ENCODE measurements at regions of chr1 and their contacts with region 1.

Region 1: GRCh38 chr1:197356723-197357533 is 88.9 kb downstream of the CRB1 start:
- DNase-seq: peak in 1 of 2 donors; percentile 9
- ATAC-seq: peak; percentile 44

Region 2: GRCh38 chr1:197180252-197180878 is 176.6 kb before region 1 on chr1:
- intact Hi-C with region 1: loop called in 1 of 2 experiments (anchors 10 kb)
- DNase-seq: no peak
- ATAC-seq: peak; percentile 55

Region 3: DNA sequence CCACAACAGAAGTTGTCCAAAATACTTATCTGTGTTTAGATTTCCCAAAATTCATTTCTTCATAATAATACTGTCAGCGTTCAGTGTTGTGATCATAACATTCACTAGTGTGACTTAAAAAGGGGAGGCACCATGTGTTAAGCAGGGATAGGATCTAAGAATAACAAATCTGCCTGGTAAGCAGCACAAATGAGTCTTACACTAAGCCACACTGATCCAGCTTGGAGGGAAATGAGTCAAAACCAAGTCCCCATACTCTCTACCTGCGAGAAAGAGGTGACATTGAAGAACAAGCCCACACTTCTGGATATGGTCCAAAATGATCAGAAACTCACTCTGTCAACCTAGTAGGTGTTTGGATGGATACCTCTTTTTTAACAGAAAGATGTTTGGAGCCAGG is 56.6 kb after region 1 on chr1:
- intact Hi-C with region 1: no loop called
- DNase-seq: no peak
- ATAC-seq: no peak

Region 4: DNA sequence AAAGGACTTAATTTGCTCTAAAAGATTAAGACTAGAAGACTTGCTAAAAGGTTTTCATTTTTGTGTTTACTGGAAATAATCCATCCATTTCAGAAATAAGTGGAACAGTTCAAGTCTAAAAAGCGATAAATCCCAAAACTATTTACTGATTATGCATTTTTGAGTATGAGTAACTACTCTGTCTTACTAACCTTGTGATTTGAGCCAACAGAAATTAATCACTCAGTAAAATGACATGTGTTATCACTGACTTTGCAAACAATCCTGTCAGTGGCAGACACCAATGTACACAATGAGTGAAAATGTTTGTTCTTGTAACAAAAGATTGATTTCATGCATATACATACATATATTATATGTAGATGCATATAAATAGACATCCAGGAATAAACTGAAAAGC is 200.4 kb after region 1 on chr1:
- intact Hi-C with region 1: no loop called
- DNase-seq: no peak
- ATAC-seq: no peak

Measured in left colon (tissue), 2 donors.